ENCODE measurements at regions of chr1 and their contacts with region 1.

Region 1: DNA sequence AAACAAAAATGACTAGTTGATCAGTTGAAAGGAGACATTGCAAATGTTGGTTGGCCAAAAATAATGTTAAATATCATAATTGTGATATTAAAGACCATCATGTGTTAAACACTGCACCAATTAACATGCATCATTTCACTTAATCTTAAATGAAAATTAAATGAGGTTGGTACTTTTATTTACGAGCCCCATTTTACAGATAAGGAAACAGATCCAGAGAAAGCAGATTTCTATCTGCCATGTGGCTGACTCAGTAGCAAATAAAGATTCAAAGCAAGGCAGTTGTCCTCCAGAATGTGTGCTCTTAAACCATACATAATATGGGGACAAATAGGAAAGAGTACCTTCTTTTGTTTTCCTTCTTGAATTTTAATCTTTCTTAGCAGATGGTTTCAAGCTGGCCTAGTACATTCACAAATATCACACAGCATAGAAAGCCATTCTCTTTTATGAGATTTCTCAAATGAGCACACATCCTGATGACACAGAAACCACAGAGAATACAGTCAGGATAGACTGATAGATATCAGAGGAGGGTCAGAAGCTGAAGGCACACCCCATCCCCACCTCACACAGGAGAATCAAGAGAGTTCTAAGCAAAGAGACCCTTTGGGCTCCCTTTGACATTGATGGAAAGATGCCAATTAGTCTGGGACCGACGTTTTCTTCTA is 647.9 kb upstream of the CAMK1G start:
- DNase-seq: no peak

Region 2: GRCh38 chr1:208841436-208841835 is 94.2 kb before region 1 on chr1:
- intact Hi-C with region 1: no loop called
- DNase-seq: no peak

Region 3: GRCh38 chr1:208923976-208924720 is 11.5 kb before region 1 on chr1:
- intact Hi-C with region 1: loop called in 1 of 2 experiments (anchors 1 kb)
- DNase-seq: no peak

Region 4: DNA sequence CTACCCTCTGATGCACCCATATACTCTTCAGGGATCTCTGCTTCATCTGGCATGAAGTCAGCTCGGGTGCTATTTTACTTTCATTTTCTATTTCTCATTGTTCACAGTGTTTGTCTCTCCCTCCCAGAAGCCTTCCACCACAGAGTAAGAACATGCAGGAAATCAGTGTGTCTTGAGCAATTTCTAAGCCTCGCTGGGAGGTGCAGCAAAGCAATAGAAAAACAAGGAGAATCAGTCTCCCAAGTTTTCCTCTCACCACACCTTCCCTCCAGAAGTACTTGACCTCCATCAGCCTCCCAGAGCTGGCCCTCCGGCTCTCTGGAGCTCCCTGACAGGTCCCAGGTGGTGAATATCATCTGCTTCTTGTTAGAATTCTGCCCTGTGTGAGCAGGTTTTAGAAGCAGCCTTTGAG is 53.2 kb after region 1 on chr1:
- intact Hi-C with region 1: no loop called
- DNase-seq: no peak

Measured in posterior vena cava (tissue), 2 donors.